PC-3 (cell line): ENCODE measurements at regions of chr13 and their contacts with region 1.

Region 1: GRCh38 chr13:30453727-30454126 is 12.0 kb downstream of the HMGB1 start:
- DNase-seq: peak; percentile 53
- ATAC-seq: peak; percentile 50; the same call in 1 of the 2 replicates
- H3K4me3 ChIP-seq: no peak overlapping the region
- H3K27ac ChIP-seq: no peak overlapping the region
- H3K4me1 ChIP-seq: no peaks in the 10 kb centered on the region
- H3K27me3 ChIP-seq: no peaks in the 10 kb centered on the region
- CTCF ChIP-seq: peak; percentile 51

Region 2: DNA sequence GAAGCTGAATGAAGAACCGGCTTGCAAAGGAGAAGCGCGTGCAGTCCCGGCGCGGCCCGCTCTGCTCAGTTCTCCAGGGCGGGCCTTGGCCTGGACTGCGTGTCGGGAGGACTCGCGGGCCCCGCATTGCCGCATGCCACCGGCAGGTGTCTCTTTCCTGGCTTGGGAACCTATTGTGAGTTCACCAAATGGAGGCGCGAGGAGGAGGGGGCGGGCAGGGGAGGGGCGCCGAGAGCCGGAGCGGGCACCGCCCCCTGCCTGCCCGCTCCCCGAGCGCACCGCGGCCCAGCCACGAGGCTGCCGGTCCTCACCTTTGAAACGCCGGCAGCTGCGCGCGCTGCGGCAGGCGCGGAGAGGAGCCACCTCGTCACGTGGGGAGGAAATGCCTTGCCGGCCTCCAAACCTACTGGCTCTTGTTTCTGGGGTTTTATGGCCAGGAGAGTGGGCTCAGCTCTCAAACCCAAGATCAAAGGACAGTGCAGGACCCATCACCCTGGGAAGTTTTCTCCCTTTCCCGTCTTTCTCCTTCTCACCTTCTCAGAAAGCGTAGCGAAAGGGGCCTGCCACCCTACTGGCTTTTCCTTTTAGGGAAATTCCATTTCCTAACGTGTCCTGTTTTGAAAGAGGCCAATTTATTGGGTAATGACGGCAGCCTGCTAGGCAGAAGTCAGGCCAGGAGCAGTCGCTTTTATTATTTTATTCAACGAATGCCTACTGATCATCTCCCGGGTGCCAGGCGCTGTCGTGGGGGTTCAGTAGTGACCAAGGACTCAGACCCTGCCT is 45.2 kb before region 1 on chr13:
- CTCF ChIA-PET with region 1: no interaction called
- POLR2A ChIA-PET with region 1: no interaction called
- intact Hi-C with region 1: loop called (anchors 10 kb)
- DNase-seq: peak; percentile 89
- ATAC-seq: peak; percentile 98
- H3K4me3 ChIP-seq: peak overlapping the region; percentile 54
- H3K27ac ChIP-seq: no peak overlapping the region
- H3K4me1 ChIP-seq: peaks cover 12% of the 10 kb centered on the region; the same call in 1 of the 2 replicates
- H3K27me3 ChIP-seq: no peaks in the 10 kb centered on the region
- CTCF ChIP-seq: peak; percentile 57

Region 3: DNA sequence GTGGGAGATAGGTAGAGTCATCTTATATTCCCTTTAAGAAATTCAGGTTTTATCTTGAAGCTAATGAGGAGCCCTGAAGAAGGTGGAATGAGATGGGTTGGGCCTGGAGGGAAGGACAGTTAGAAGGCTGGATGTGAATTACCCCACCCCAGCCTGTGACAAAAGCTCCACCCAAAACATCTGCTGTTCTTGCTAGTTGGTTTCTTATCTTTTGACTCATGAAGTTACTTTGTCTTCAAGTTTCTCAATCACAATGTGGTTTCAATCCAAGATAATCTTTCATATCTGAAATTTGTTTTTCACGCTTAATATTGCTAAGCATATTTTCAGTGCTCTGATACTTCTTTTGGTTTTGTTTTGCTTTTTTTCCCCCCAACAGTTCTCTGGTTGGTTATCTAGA is 50.4 kb after region 1 on chr13:
- CTCF ChIA-PET with region 1: no interaction called
- POLR2A ChIA-PET with region 1: interaction called, 14 read pairs
- intact Hi-C with region 1: no loop called
- DNase-seq: no peak
- ATAC-seq: no peak
- H3K4me3 ChIP-seq: no peak overlapping the region
- H3K27ac ChIP-seq: no peak overlapping the region
- H3K4me1 ChIP-seq: no peaks in the 10 kb centered on the region
- H3K27me3 ChIP-seq: no peaks in the 10 kb centered on the region
- CTCF ChIP-seq: no peak